PC-3 (cell line): ENCODE measurements at regions of chr14 and their contacts with region 1.

Region 1: GRCh38 chr14:53458368-53458814 is 305.3 kb upstream of the DDHD1 start:
- DNase-seq: peak; percentile 95
- ATAC-seq: peak; percentile 95
- H3K4me3 ChIP-seq: peak overlapping the region; percentile 41; the same call in 1 of the 2 replicates
- H3K27ac ChIP-seq: peak overlapping the region; percentile 90
- H3K4me1 ChIP-seq: peaks cover 27% of the 10 kb centered on the region
- H3K27me3 ChIP-seq: no peaks in the 10 kb centered on the region
- CTCF ChIP-seq: no peak

Region 2: GRCh38 chr14:53055003-53055402 is 403.4 kb before region 1 on chr14:
- CTCF ChIA-PET with region 1: no interaction called
- POLR2A ChIA-PET with region 1: no interaction called
- intact Hi-C with region 1: no loop called
- DNase-seq: peak; percentile 78
- ATAC-seq: peak; percentile 95
- H3K4me3 ChIP-seq: no peak overlapping the region
- H3K27ac ChIP-seq: no peak overlapping the region
- H3K4me1 ChIP-seq: peaks cover 1% of the 10 kb centered on the region; the same call in 1 of the 2 replicates
- H3K27me3 ChIP-seq: no peaks in the 10 kb centered on the region
- CTCF ChIP-seq: peak; percentile 94

Region 3: GRCh38 chr14:53368711-53369191 is 89.6 kb before region 1 on chr14:
- CTCF ChIA-PET with region 1: no interaction called
- POLR2A ChIA-PET with region 1: interaction called, 3 read pairs
- intact Hi-C with region 1: loop called (anchors 5 kb)
- DNase-seq: peak; percentile 70
- ATAC-seq: peak; percentile 81
- H3K4me3 ChIP-seq: no peak overlapping the region
- H3K27ac ChIP-seq: peak overlapping the region; percentile 14; the same call in 1 of the 2 replicates
- H3K4me1 ChIP-seq: peaks cover 35% of the 10 kb centered on the region
- H3K27me3 ChIP-seq: no peaks in the 10 kb centered on the region
- CTCF ChIP-seq: no peak

Region 4: DNA sequence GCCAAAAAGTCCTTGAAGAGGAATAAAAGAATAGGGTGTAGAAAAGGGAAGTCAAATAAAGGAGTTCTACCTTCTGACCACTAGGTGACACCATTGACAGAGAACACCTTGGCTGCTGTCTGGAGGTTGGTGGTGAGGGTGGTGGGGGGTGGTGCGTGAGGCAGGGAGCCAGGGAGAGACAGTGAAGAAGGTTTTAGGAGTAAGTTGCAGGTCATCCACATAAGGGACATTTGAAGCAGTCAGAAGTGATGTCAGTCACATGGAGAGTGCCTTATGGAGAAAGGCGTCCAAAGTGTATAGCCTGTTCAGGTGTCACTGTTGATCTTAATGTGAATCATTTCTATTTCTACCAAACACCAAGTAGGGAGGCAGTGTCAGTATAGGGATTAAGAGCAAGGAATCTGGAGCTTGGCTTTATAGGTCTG is 26.0 kb before region 1 on chr14:
- CTCF ChIA-PET with region 1: interaction called, 5 read pairs
- POLR2A ChIA-PET with region 1: no interaction called
- intact Hi-C with region 1: loop called (anchors 1 kb)
- DNase-seq: peak; percentile 77
- ATAC-seq: peak; percentile 95
- H3K4me3 ChIP-seq: no peak overlapping the region
- H3K27ac ChIP-seq: no peak overlapping the region
- H3K4me1 ChIP-seq: peaks cover 18% of the 10 kb centered on the region
- H3K27me3 ChIP-seq: no peaks in the 10 kb centered on the region
- CTCF ChIP-seq: peak; percentile 96

Region 5: GRCh38 chr14:53444677-53445312 is 13.6 kb before region 1 on chr14:
- CTCF ChIA-PET with region 1: no interaction called
- POLR2A ChIA-PET with region 1: no interaction called
- intact Hi-C with region 1: loop called (anchors 1 kb)
- DNase-seq: peak; percentile 60
- ATAC-seq: peak; percentile 92
- H3K4me3 ChIP-seq: no peak overlapping the region
- H3K27ac ChIP-seq: no peak overlapping the region
- H3K4me1 ChIP-seq: no peaks in the 10 kb centered on the region
- H3K27me3 ChIP-seq: no peaks in the 10 kb centered on the region
- CTCF ChIP-seq: no peak

Region 6: GRCh38 chr14:53613404-53614253 is 155.2 kb after region 1 on chr14:
- CTCF ChIA-PET with region 1: no interaction called
- POLR2A ChIA-PET with region 1: no interaction called
- intact Hi-C with region 1: loop called (anchors 10 kb)
- DNase-seq: peak; percentile 92
- ATAC-seq: peak; percentile 98
- H3K4me3 ChIP-seq: peak overlapping the region; percentile 46
- H3K27ac ChIP-seq: peak overlapping the region; percentile 30
- H3K4me1 ChIP-seq: peaks cover 18% of the 10 kb centered on the region
- H3K27me3 ChIP-seq: no peaks in the 10 kb centered on the region
- CTCF ChIP-seq: peak; percentile 40; the same call in 1 of the 2 replicates

Region 7: GRCh38 chr14:53790731-53791515 is 332.5 kb after region 1 on chr14:
- CTCF ChIA-PET with region 1: no interaction called
- POLR2A ChIA-PET with region 1: no interaction called
- intact Hi-C with region 1: no loop called
- DNase-seq: no peak
- ATAC-seq: no peak
- H3K4me3 ChIP-seq: no peak overlapping the region
- H3K27ac ChIP-seq: no peak overlapping the region
- H3K4me1 ChIP-seq: peaks cover 8% of the 10 kb centered on the region; the same call in 1 of the 2 replicates
- H3K27me3 ChIP-seq: no peaks in the 10 kb centered on the region
- CTCF ChIP-seq: no peak

Region 8: GRCh38 chr14:54356172-54356571 is 897.8 kb after region 1 on chr14:
- CTCF ChIA-PET with region 1: no interaction called
- POLR2A ChIA-PET with region 1: no interaction called
- intact Hi-C with region 1: loop called (anchors 5 kb)
- DNase-seq: peak; percentile 100
- ATAC-seq: peak; percentile 83
- H3K4me3 ChIP-seq: peak overlapping the region; percentile 27
- H3K27ac ChIP-seq: peak overlapping the region; percentile 88
- H3K4me1 ChIP-seq: peaks cover 53% of the 10 kb centered on the region
- H3K27me3 ChIP-seq: no peaks in the 10 kb centered on the region
- CTCF ChIP-seq: no peak